ENCODE measurements at regions of chr2 and their contacts with region 1.

Region 1: DNA sequence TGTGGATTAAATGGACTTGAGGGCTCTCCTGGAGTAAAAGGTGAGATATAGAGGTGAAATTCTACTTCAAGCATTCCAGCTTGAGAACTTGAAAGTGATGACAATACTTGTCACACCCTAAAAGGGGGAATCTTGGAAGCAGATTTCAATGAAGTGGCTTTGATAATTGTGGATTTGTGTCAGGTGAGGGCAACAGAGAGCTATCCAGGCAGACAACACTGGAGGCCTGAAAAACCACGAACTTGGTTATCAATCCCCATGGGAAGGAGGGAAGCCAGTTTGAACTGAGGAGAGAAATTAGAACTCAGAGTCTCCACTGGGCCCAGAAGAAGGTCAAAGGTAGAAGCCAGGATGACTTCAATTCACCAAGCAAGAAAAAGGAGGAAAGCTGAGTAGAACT is 263.9 kb downstream of the FIGN start:
- DNase-seq: no peak
- H3K4me3 ChIP-seq: no peak overlapping the region
- H3K27ac ChIP-seq: no peak overlapping the region
- H3K4me1 ChIP-seq: peaks cover 0 to 6% (median 0%) of the 10 kb centered on the region in 4 experiments; a peak in 1 of 7 replicates
- H3K27me3 ChIP-seq: no peaks in the 10 kb centered on the region
- CTCF ChIP-seq: peak in 2 of 3 experiments; percentile 32 to 52; a peak in 2 of 4 replicates
- EP300 ChIP-seq: no peak
- POLR2A ChIP-seq: no peak
- RAD21 ChIP-seq: peak; percentile 75

Region 2: GRCh38 chr2:163456953-163457743 is 14.8 kb before region 1 on chr2:
- CTCF ChIA-PET with region 1: interaction called, 13 read pairs
- POLR2A ChIA-PET with region 1: no interaction called
- DNase-seq: no peak
- H3K4me3 ChIP-seq: no peak overlapping the region
- H3K27ac ChIP-seq: no peak overlapping the region
- H3K4me1 ChIP-seq: no peaks in the 10 kb centered on the region
- H3K27me3 ChIP-seq: no peaks in the 10 kb centered on the region
- CTCF ChIP-seq: no peak
- EP300 ChIP-seq: no peak
- POLR2A ChIP-seq: no peak
- RAD21 ChIP-seq: no peak

Region 3: GRCh38 chr2:163493359-163494298 is 21.7 kb after region 1 on chr2:
- CTCF ChIA-PET with region 1: no interaction called
- POLR2A ChIA-PET with region 1: no interaction called
- DNase-seq: no peak
- H3K4me3 ChIP-seq: no peak overlapping the region
- H3K27ac ChIP-seq: no peak overlapping the region
- H3K4me1 ChIP-seq: no peaks in the 10 kb centered on the region
- H3K27me3 ChIP-seq: no peaks in the 10 kb centered on the region
- CTCF ChIP-seq: no peak
- EP300 ChIP-seq: no peak
- POLR2A ChIP-seq: no peak
- RAD21 ChIP-seq: no peak

Region 4: DNA sequence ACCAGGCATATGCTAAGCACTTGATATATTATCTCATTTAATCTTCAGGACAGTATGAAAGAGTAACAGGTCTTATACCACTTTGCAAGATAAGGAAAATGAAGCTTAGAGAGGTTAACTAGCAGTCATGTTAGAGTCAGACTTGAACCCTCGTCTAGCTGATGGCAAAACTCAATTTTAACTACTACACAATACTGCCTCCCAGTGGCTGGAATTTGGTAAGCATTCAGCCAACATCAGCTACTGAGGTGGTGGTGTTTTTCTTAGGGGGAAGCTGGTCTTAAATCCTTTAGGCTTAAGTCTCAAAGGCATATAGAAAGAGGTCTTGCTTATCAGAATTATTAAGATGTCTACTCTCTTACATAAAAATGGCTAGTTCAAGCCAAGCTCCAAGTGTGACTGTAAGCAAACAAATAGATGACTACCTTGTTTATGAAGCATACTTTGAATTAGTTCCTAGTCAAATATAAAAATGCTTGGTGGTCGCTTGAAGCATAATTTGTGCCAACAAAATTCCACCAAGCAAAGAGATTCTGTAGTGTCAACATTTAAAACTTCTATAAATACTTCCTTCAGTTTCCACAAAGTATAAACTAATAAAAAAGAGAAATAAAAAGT is 589.3 kb after region 1 on chr2:
- CTCF ChIA-PET with region 1: interaction called, 10 read pairs
- POLR2A ChIA-PET with region 1: no interaction called
- DNase-seq: peak; percentile 43 to 85
- H3K4me3 ChIP-seq: no peak overlapping the region
- H3K27ac ChIP-seq: no peak overlapping the region
- H3K4me1 ChIP-seq: no peaks in the 10 kb centered on the region
- H3K27me3 ChIP-seq: peaks cover 0 to 1% (median 0%) of the 10 kb centered on the region in 4 experiments; a peak in 1 of 7 replicates
- CTCF ChIP-seq: peak in 2 of 3 experiments; percentile 70 to 88; a peak in 3 of 4 replicates
- EP300 ChIP-seq: no peak
- POLR2A ChIP-seq: no peak
- RAD21 ChIP-seq: peak; percentile 85 to 91